Activated CD4-positive, alpha-beta T cell treated with anti-CD3 and anti-CD28 coated beads for 36 hours (primary cell): ENCODE measurements at regions of chr1 and their contacts with region 1.

Region 1: GRCh38 chr1:147769106-147769505 is 8.7 kb upstream of the GJA5 start:
- DNase-seq: no peak
- ATAC-seq: no peak
- H3K4me3 Mint-ChIP-seq: no peak overlapping the region
- H3K27ac Mint-ChIP-seq: no peak overlapping the region
- H3K4me1 Mint-ChIP-seq: peaks cover 7% of the 10 kb centered on the region
- H3K27me3 Mint-ChIP-seq: peaks cover 9% of the 10 kb centered on the region

Region 2: GRCh38 chr1:147812799-147813198 is 43.7 kb after region 1 on chr1:
- CTCF ChIA-PET with region 1: no interaction called
- POLR2A ChIA-PET with region 1: no interaction called
- intact Hi-C with region 1: loop called in 1 of 2 experiments (anchors 5 kb)
- DNase-seq: no peak
- ATAC-seq: no peak
- H3K4me3 Mint-ChIP-seq: no peak overlapping the region
- H3K27ac Mint-ChIP-seq: no peak overlapping the region
- H3K4me1 Mint-ChIP-seq: peaks cover 5% of the 10 kb centered on the region
- H3K27me3 Mint-ChIP-seq: no peaks in the 10 kb centered on the region